Calu3 (cell line): ENCODE measurements at regions of chr12 and their contacts with region 1.

Region 1: DNA sequence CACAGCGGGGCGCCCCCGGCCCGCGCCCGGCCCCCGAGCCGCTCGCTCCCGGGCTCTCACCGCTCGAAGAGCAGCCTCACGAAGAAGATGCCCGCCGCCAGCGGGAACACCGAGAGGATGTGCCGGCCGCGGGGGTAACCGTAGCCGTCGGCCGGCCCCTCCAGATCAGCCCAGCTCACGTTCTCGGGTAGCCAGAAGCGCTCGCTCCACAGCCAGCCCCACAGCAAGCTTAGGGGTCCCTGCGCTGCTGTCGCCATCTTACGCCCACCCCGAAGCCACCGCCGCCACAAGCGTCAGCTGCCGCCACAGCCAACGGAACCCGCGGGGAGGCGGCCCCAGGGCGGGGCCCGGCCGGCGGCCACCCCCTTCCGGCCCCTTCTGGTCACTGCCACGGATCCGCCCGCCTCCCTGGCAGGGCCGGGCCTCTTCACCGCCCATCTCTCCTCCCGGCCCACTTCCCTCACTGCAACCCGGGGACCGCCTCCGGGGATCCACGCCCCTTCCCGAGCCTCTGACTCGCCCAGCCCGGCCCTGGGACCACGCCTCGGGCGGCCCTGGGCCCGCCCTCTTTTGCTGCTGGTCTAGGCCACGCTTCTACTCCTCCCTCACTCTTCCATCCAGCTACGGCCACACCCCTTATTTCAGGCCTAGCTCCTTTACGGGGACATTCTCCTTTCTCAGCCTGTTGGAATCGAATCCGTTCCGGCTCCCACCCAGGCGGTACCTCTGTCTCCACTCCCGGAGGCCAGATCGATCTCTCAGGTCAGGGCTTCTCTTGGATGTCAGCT is at the start of gene CERS5:
- DNase-seq: peak; percentile 97
- H3K4me3 Mint-ChIP-seq: peak within 1 kb of the TSS; percentile 79
- H3K27ac Mint-ChIP-seq: peak within 1 kb of the TSS; percentile 12
- H3K4me1 Mint-ChIP-seq: peaks cover 9% of the 10 kb centered on the region
- H3K27me3 Mint-ChIP-seq: no peaks in the 10 kb centered on the region
- CTCF ChIP-seq: no peak
- total RNA-seq, gene CERS5: 27.3 and 28.2 TPM in 2 replicates

Region 2: GRCh38 chr12:50111693-50112455 is 55.4 kb before region 1 on chr12 and contains the start of gene COX14:
- CTCF ChIA-PET with region 1: interaction called, 10 read pairs
- intact Hi-C with region 1: no loop called
- DNase-seq: peak; percentile 94
- H3K4me3 Mint-ChIP-seq: peak within 1 kb of the TSS; percentile 98
- H3K27ac Mint-ChIP-seq: peak within 1 kb of the TSS; percentile 98
- H3K4me1 Mint-ChIP-seq: peaks cover 11% of the 10 kb centered on the region
- H3K27me3 Mint-ChIP-seq: no peaks in the 10 kb centered on the region
- CTCF ChIP-seq: peak; percentile 58
- total RNA-seq, gene COX14: 37.1 and 39.7 TPM in 2 replicates

Region 3: GRCh38 chr12:50147281-50147680 is 20.0 kb before region 1 on chr12:
- CTCF ChIA-PET with region 1: no interaction called
- intact Hi-C with region 1: no loop called
- DNase-seq: no peak
- H3K4me3 Mint-ChIP-seq: no peak overlapping the region
- H3K27ac Mint-ChIP-seq: no peak overlapping the region
- H3K4me1 Mint-ChIP-seq: peaks cover 5% of the 10 kb centered on the region
- H3K27me3 Mint-ChIP-seq: no peaks in the 10 kb centered on the region
- CTCF ChIP-seq: no peak